ENCODE measurements at regions of chr10 and their contacts with region 1.

Region 1: DNA sequence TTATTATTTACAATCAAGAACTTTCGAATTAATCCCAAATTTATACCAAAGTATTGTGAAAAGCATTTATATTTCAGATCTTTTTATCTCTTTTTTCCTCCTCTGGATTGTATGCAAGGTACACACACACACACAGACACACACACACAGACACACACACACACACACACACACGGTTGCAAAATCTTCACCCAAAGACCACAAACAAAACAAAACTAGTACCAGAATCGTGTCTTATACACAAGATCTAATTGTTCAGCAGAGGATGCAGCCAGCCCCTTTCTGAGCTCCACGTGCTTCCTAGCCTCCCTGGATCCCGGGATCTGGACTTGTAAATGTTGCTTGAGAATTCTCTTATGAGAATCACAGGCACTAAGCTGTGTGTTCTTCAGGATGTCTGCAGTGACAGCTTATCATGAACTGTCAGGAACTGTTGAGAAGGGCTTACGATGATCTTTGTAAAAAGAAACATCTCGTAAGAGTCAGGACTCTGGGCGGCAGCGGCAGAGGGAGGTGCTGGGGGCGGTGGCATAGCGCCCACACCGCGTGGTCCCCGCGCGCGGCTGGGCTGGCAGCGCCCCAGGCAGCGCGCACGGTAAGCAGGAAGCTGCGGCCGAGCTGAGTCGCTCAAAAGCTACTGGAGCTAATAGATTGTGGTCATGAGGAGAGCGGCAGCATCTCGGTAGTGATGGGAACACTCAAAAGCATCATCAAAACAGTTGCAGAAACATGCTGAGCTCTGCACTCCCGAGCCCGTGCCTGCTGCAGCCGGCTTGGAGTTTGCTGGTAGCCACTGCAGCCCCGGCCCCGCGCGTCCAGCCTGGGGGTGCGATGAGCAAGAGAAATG is 277.6 kb downstream of the GATA3 start:
- DNase-seq: peak; percentile 84 to 97
- ATAC-seq: peak; percentile 89 to 96 (median 96)
- H3K4me3 ChIP-seq: peak overlapping the region; percentile 52
- H3K4me3 Mint-ChIP-seq: peak overlapping the region; percentile 61
- H3K27ac ChIP-seq: peak overlapping the region; percentile 91
- H3K27ac Mint-ChIP-seq: peak overlapping the region; percentile 73 to 89
- H3K4me1 ChIP-seq: peaks cover 25% of the 10 kb centered on the region
- H3K4me1 Mint-ChIP-seq: peaks cover 30 to 38% of the 10 kb centered on the region in 2 donors
- H3K27me3 ChIP-seq: no peaks in the 10 kb centered on the region
- H3K27me3 Mint-ChIP-seq: peaks cover 0 to 2% of the 10 kb centered on the region in 2 donors
- CTCF ChIP-seq: no peak

Region 2: DNA sequence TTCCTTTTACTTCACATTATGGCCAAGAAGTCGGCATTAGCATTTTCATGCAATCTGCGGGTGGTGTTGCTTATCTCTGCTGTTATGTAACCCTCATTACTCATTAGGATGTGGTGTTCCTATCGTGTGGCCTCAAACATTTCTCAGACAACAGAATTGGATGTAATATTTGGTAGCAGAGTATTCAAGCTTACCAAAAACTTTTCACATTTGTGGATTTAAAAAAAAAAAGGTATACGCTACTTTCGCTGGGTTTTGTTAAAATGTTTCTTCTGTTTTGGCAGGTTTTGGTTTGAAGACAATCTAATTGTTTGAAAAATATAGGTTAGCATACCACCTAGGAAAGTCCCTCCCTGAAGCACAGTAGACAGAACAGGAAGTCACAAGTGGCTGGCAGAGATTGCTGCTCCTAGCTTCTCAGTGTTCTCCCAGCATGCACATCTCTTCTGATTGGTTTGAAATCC is 148.8 kb before region 1 on chr10:
- intact Hi-C with region 1: loop called (anchors 2 kb)
- DNase-seq: peak in 1 of 2 donors; percentile 86
- ATAC-seq: peak; percentile 92 to 96 (median 95)
- H3K4me3 ChIP-seq: no peak overlapping the region
- H3K4me3 Mint-ChIP-seq: peak overlapping the region; percentile 18
- H3K27ac ChIP-seq: peak overlapping the region; percentile 36
- H3K27ac Mint-ChIP-seq: peak overlapping the region; percentile 83 to 89
- H3K4me1 ChIP-seq: peaks cover 8% of the 10 kb centered on the region
- H3K4me1 Mint-ChIP-seq: peaks cover 21 to 29% of the 10 kb centered on the region in 2 donors
- H3K27me3 ChIP-seq: no peaks in the 10 kb centered on the region
- H3K27me3 Mint-ChIP-seq: peaks cover 4 to 23% of the 10 kb centered on the region in 2 donors
- CTCF ChIP-seq: no peak

Region 3: DNA sequence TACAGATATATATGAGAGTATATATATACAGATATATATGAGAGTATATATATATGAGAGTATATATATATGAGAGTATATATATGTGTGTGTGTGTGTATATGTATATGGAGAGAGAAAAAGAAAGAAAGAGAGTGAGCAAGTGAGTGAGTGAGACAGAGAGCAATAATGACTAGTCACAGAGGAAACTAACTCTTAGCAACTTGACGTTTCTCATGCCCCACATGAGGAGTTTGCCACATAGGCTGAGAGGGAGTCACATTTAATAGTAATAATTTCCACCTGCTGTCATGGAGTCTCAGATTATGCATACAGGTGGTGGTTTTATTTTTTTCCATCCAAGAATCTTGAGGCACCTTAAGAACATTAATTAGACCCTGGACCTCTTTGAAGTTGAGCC is 77.8 kb before region 1 on chr10:
- intact Hi-C with region 1: no loop called
- DNase-seq: no peak
- ATAC-seq: no peak
- H3K4me3 ChIP-seq: no peak overlapping the region
- H3K4me3 Mint-ChIP-seq: no peak overlapping the region
- H3K27ac ChIP-seq: no peak overlapping the region
- H3K27ac Mint-ChIP-seq: no peak overlapping the region
- H3K4me1 ChIP-seq: no peaks in the 10 kb centered on the region
- H3K4me1 Mint-ChIP-seq: no peaks in the 10 kb centered on the region
- H3K27me3 ChIP-seq: no peaks in the 10 kb centered on the region
- H3K27me3 Mint-ChIP-seq: peaks cover 4 to 8% of the 10 kb centered on the region in 2 donors
- CTCF ChIP-seq: no peak

Region 4: GRCh38 chr10:8365935-8366911 is 34.1 kb after region 1 on chr10:
- intact Hi-C with region 1: loop called (anchors 2 kb)
- DNase-seq: peak in 1 of 2 donors; percentile 81
- ATAC-seq: peak; percentile 47 to 74 (median 69)
- H3K4me3 ChIP-seq: no peak overlapping the region
- H3K4me3 Mint-ChIP-seq: no peak overlapping the region
- H3K27ac ChIP-seq: peak overlapping the region; percentile 59
- H3K27ac Mint-ChIP-seq: peak overlapping the region in 1 of 2 donors; percentile 9
- H3K4me1 ChIP-seq: peaks cover 23% of the 10 kb centered on the region
- H3K4me1 Mint-ChIP-seq: peaks cover 37 to 46% of the 10 kb centered on the region in 2 donors
- H3K27me3 ChIP-seq: no peaks in the 10 kb centered on the region
- H3K27me3 Mint-ChIP-seq: no peaks in the 10 kb centered on the region
- CTCF ChIP-seq: no peak

Region 5: DNA sequence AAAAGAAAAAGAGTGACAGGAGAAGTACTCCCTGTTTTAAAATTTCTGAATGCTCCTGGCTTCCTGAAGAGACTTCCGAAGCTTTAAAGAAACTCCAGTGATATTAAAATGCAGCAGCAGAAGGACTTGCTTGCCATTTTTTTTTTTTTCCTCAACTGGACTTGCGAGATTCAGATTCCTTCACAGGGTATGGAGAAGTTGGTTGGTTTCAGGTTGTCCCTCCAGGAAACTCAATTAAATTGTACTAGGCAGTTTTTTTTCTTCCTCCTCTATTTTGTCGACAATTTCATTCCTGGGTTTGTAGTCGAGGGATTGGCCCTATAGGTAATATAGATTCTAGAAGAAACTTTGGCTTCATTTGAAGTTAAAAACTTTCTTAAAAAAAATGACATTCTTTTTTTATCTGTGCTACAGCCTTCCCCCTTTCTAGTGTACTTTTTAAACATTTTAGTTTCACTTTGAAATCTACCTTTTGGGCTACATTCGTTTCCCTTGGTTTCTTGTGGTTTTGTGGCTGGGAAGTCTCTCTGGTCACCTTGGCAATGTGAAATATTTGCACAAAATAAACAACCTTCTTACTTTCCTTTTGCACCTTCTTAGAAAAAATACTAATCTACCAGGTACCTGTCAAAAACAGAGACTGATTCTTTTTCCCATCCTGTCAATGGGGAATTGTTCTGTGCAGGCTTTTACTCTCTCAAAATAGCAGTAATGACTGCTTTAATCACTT is 72.5 kb after region 1 on chr10:
- intact Hi-C with region 1: loop called (anchors 1 kb)
- DNase-seq: peak in 1 of 2 donors; percentile 92
- ATAC-seq: peak; percentile 55 to 81 (median 56)
- H3K4me3 ChIP-seq: peak overlapping the region; percentile 7
- H3K4me3 Mint-ChIP-seq: peak overlapping the region; percentile 84
- H3K27ac ChIP-seq: peak overlapping the region; percentile 91
- H3K27ac Mint-ChIP-seq: peak overlapping the region; percentile 81 to 88
- H3K4me1 ChIP-seq: peaks cover 45% of the 10 kb centered on the region
- H3K4me1 Mint-ChIP-seq: peaks cover 61 to 64% of the 10 kb centered on the region in 2 donors
- H3K27me3 ChIP-seq: no peaks in the 10 kb centered on the region
- H3K27me3 Mint-ChIP-seq: peaks cover 0 to 3% of the 10 kb centered on the region in 2 donors
- CTCF ChIP-seq: no peak

Region 6: DNA sequence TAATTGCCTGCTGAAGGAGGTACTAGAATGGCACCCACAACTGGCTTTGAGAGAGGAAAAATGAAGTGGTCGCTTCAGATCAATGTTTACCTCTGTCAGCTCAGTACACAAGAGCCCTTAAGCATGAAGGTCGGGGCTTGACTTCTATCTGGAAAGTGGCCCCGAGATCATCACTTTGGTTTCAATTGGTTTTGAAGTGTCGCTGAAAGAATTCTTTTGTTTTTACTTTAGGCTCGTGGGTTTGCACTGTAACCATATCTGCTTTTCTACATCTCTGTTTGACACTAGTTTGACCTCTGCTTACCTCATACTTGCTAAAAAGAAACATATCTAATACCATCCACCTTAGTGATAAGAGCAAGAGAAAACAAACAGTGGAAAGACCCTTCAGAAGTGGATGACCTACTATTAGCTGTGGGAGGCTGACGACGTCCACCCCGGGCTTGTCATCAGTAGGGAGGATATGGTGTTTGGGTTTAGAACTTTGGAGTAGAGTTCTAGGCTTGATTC is 84.1 kb after region 1 on chr10:
- intact Hi-C with region 1: loop called (anchors 1 kb)
- DNase-seq: peak; percentile 35 to 83
- ATAC-seq: peak; percentile 83 to 92 (median 91)
- H3K4me3 ChIP-seq: no peak overlapping the region
- H3K4me3 Mint-ChIP-seq: peak overlapping the region; percentile 79
- H3K27ac ChIP-seq: peak overlapping the region; percentile 93
- H3K27ac Mint-ChIP-seq: peak overlapping the region; percentile 97
- H3K4me1 ChIP-seq: peaks cover 19% of the 10 kb centered on the region
- H3K4me1 Mint-ChIP-seq: peaks cover 36 to 37% of the 10 kb centered on the region in 2 donors
- H3K27me3 ChIP-seq: no peaks in the 10 kb centered on the region
- H3K27me3 Mint-ChIP-seq: peaks cover 0 to 3% of the 10 kb centered on the region in 2 donors
- CTCF ChIP-seq: no peak

Measured in natural killer cell (primary cell).